Naive thymus-derived CD4-positive, alpha-beta T cell (primary cell): ENCODE measurements at regions of chr14 and their contacts with region 1.

Region 1: GRCh38 chr14:60248697-60249318 is at the start of gene PPM1A:
- DNase-seq: peak; percentile 91 to 95 (median 93)
- ATAC-seq: peak; percentile 89
- H3K4me3 ChIP-seq: peak within 1 kb of the TSS; percentile 93
- H3K4me3 Mint-ChIP-seq: peak within 1 kb of the TSS; percentile 90 to 99 (median 96)
- H3K27ac ChIP-seq: peak within 1 kb of the TSS; percentile 100
- H3K27ac Mint-ChIP-seq: peak within 1 kb of the TSS; percentile 97 to 100 (median 100)
- H3K4me1 ChIP-seq: peaks cover 7 to 44% of the 10 kb centered on the region in 2 donors
- H3K4me1 Mint-ChIP-seq: peaks cover 40 to 58% (median 50%) of the 10 kb centered on the region in 7 donors
- H3K27me3 ChIP-seq: no peaks in the 10 kb centered on the region
- H3K27me3 Mint-ChIP-seq: no peaks in the 10 kb centered on the region
- total RNA-seq, gene PPM1A: 42.0 to 71.4 (median 47.3) TPM

Region 2: DNA sequence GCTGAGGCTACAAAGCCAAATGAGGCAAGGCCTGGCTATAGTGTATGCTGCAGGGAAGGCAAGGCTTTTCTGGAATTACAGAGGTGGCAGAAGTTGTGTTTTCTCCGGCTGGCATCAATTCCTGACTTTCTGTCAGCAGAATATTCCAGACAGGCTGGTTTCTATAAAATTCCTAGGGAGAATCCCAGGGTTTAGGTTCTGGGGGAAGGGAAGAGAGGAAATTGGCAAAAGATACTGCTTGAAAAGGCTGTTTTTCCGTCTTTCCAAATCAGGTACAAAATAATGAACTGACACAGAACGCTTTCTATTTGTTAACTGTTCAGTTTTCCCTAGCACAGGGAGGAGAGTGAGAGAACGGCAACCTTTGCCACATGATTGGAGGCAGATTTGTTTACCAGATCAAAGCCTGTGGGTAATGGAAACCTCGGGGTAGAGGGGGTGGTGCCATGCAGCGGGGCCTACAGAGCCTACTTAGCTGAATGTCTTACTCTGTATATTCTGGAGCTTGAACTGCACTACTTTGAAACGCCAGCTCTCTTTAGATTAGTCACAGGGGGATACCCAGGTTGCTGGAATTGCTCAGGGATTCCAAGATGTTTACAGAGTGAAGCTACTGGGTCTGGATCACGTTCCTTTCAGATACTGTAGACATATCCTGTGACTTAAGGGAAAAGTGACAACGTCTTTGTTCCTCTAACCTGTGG is 1676.9 kb before region 1 on chr14:
- CTCF ChIA-PET with region 1: no interaction called
- POLR2A ChIA-PET with region 1: no interaction called
- intact Hi-C with region 1: loop called in 1 of 2 experiments (anchors 5 kb)
- DNase-seq: peak in 8 of 9 donors; percentile 41 to 80 (median 69)
- ATAC-seq: peak; percentile 87
- H3K4me3 ChIP-seq: no peak overlapping the region
- H3K4me3 Mint-ChIP-seq: peak overlapping the region; percentile 35 to 83 (median 70)
- H3K27ac ChIP-seq: peak overlapping the region; percentile 40
- H3K27ac Mint-ChIP-seq: peak overlapping the region; percentile 74 to 96 (median 93)
- H3K4me1 ChIP-seq: peaks cover 0 to 33% of the 10 kb centered on the region in 2 donors
- H3K4me1 Mint-ChIP-seq: peaks cover 14 to 67% (median 51%) of the 10 kb centered on the region in 7 donors
- H3K27me3 ChIP-seq: no peaks in the 10 kb centered on the region
- H3K27me3 Mint-ChIP-seq: no peaks in the 10 kb centered on the region

Region 3: GRCh38 chr14:60051721-60052221 is 197.0 kb before region 1 on chr14:
- CTCF ChIA-PET with region 1: no interaction called
- POLR2A ChIA-PET with region 1: no interaction called
- intact Hi-C with region 1: no loop called
- DNase-seq: peak in 6 of 9 donors; percentile 2 to 26 (median 16)
- ATAC-seq: peak; percentile 61
- H3K4me3 ChIP-seq: no peak overlapping the region
- H3K4me3 Mint-ChIP-seq: peak overlapping the region; percentile 2 to 72 (median 50)
- H3K27ac ChIP-seq: no peak overlapping the region
- H3K27ac Mint-ChIP-seq: peak overlapping the region in 2 of 9 donors; percentile 19 to 56
- H3K4me1 ChIP-seq: peaks cover 0 to 6% of the 10 kb centered on the region in 2 donors
- H3K4me1 Mint-ChIP-seq: peaks cover 9 to 54% (median 22%) of the 10 kb centered on the region in 7 donors
- H3K27me3 ChIP-seq: no peaks in the 10 kb centered on the region
- H3K27me3 Mint-ChIP-seq: peaks cover 0 to 27% (median 10%) of the 10 kb centered on the region in 5 donors

Region 4: GRCh38 chr14:60091550-60092530 is 157.0 kb before region 1 on chr14 and contains the start of gene PCNX4:
- CTCF ChIA-PET with region 1: no interaction called
- POLR2A ChIA-PET with region 1: interaction called, 15 read pairs
- intact Hi-C with region 1: loop called (anchors 1 kb)
- DNase-seq: peak; percentile 79 to 95 (median 94)
- ATAC-seq: peak; percentile 95
- H3K4me3 ChIP-seq: peak within 1 kb of the TSS; percentile 94
- H3K4me3 Mint-ChIP-seq: peak within 1 kb of the TSS; percentile 88 to 98 (median 95)
- H3K27ac ChIP-seq: peak within 1 kb of the TSS; percentile 96
- H3K27ac Mint-ChIP-seq: peak within 1 kb of the TSS; percentile 90 to 99 (median 96)
- H3K4me1 ChIP-seq: peaks cover 14 to 16% of the 10 kb centered on the region in 2 donors
- H3K4me1 Mint-ChIP-seq: peaks cover 28 to 48% (median 41%) of the 10 kb centered on the region in 7 donors
- H3K27me3 ChIP-seq: peaks cover 0 to 4% of the 10 kb centered on the region in 2 donors
- H3K27me3 Mint-ChIP-seq: peaks cover 0 to 5% (median 0%) of the 10 kb centered on the region in 5 donors
- total RNA-seq, gene PCNX4: 34.9 to 48.2 (median 43.3) TPM

Region 5: GRCh38 chr14:60225265-60225664 is 23.5 kb before region 1 on chr14:
- CTCF ChIA-PET with region 1: no interaction called
- POLR2A ChIA-PET with region 1: interaction called, 4 read pairs
- intact Hi-C with region 1: loop called in 1 of 2 experiments (anchors 2 kb)
- DNase-seq: no peak
- ATAC-seq: no peak
- H3K4me3 ChIP-seq: no peak overlapping the region
- H3K4me3 Mint-ChIP-seq: no peak overlapping the region
- H3K27ac ChIP-seq: no peak overlapping the region
- H3K27ac Mint-ChIP-seq: no peak overlapping the region
- H3K4me1 ChIP-seq: no peaks in the 10 kb centered on the region
- H3K4me1 Mint-ChIP-seq: no peaks in the 10 kb centered on the region
- H3K27me3 ChIP-seq: no peaks in the 10 kb centered on the region
- H3K27me3 Mint-ChIP-seq: no peaks in the 10 kb centered on the region

Region 6: GRCh38 chr14:60585676-60586075 is 336.9 kb after region 1 on chr14:
- CTCF ChIA-PET with region 1: no interaction called
- POLR2A ChIA-PET with region 1: no interaction called
- intact Hi-C with region 1: no loop called
- DNase-seq: no peak
- ATAC-seq: no peak
- H3K4me3 ChIP-seq: no peak overlapping the region
- H3K4me3 Mint-ChIP-seq: no peak overlapping the region
- H3K27ac ChIP-seq: no peak overlapping the region
- H3K27ac Mint-ChIP-seq: no peak overlapping the region
- H3K4me1 ChIP-seq: no peaks in the 10 kb centered on the region
- H3K4me1 Mint-ChIP-seq: no peaks in the 10 kb centered on the region
- H3K27me3 ChIP-seq: no peaks in the 10 kb centered on the region
- H3K27me3 Mint-ChIP-seq: peaks cover 7 to 30% (median 16%) of the 10 kb centered on the region in 5 donors

Region 7: GRCh38 chr14:60734465-60735242 is 485.8 kb after region 1 on chr14 and contains the start of gene MNAT1:
- CTCF ChIA-PET with region 1: no interaction called
- POLR2A ChIA-PET with region 1: no interaction called
- intact Hi-C with region 1: loop called in 1 of 2 experiments (anchors 10 kb)
- DNase-seq: peak; percentile 65 to 81 (median 75)
- ATAC-seq: peak; percentile 95
- H3K4me3 ChIP-seq: peak within 1 kb of the TSS; percentile 64
- H3K4me3 Mint-ChIP-seq: peak within 1 kb of the TSS; percentile 95 to 100 (median 99)
- H3K27ac ChIP-seq: peak within 1 kb of the TSS; percentile 70
- H3K27ac Mint-ChIP-seq: peak within 1 kb of the TSS; percentile 88 to 99 (median 94)
- H3K4me1 ChIP-seq: peaks cover 0 to 10% of the 10 kb centered on the region in 2 donors
- H3K4me1 Mint-ChIP-seq: peaks cover 22 to 37% (median 29%) of the 10 kb centered on the region in 7 donors
- H3K27me3 ChIP-seq: peaks cover 0 to 4% of the 10 kb centered on the region in 2 donors
- H3K27me3 Mint-ChIP-seq: peaks cover 13 to 42% (median 22%) of the 10 kb centered on the region in 5 donors
- total RNA-seq, gene MNAT1: 16.0 to 39.1 (median 20.0) TPM

Region 8: DNA sequence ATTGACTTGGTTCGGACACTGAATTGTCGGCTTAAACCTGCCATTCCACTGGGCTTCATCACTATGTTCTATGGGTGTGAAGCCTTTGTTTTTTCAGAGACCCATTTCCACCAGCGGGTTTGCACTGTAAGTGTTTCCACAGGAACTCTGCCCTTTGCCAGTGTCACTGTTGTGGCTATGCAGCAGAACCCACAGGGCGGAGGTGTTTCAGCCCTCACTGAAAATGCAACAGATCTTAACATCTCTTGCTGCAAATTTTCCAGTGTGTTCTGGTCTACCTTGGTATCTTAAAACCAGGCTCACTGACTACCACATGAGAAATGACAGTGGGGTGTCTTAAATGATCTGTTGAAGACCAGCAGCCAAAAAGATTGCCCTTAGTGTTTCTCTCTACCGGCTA is 1093.7 kb after region 1 on chr14:
- CTCF ChIA-PET with region 1: no interaction called
- POLR2A ChIA-PET with region 1: no interaction called
- intact Hi-C with region 1: loop called in 1 of 2 experiments (anchors 5 kb)
- DNase-seq: peak; percentile 46 to 91 (median 87)
- ATAC-seq: peak; percentile 76
- H3K4me3 ChIP-seq: peak overlapping the region; percentile 28
- H3K4me3 Mint-ChIP-seq: peak overlapping the region; percentile 76 to 97 (median 82)
- H3K27ac ChIP-seq: peak overlapping the region; percentile 76
- H3K27ac Mint-ChIP-seq: peak overlapping the region in 8 of 9 donors; percentile 92 to 100 (median 98)
- H3K4me1 ChIP-seq: peaks cover 92% of the 10 kb centered on the region in 2 donors
- H3K4me1 Mint-ChIP-seq: peaks cover 18 to 94% (median 82%) of the 10 kb centered on the region in 7 donors
- H3K27me3 ChIP-seq: no peaks in the 10 kb centered on the region
- H3K27me3 Mint-ChIP-seq: no peaks in the 10 kb centered on the region